Activated CD8-positive, alpha-beta T cell treated with anti-CD3 and anti-CD28 coated beads for 36 hours (primary cell): ENCODE measurements at regions of chr10 and their contacts with region 1.

Region 1: DNA sequence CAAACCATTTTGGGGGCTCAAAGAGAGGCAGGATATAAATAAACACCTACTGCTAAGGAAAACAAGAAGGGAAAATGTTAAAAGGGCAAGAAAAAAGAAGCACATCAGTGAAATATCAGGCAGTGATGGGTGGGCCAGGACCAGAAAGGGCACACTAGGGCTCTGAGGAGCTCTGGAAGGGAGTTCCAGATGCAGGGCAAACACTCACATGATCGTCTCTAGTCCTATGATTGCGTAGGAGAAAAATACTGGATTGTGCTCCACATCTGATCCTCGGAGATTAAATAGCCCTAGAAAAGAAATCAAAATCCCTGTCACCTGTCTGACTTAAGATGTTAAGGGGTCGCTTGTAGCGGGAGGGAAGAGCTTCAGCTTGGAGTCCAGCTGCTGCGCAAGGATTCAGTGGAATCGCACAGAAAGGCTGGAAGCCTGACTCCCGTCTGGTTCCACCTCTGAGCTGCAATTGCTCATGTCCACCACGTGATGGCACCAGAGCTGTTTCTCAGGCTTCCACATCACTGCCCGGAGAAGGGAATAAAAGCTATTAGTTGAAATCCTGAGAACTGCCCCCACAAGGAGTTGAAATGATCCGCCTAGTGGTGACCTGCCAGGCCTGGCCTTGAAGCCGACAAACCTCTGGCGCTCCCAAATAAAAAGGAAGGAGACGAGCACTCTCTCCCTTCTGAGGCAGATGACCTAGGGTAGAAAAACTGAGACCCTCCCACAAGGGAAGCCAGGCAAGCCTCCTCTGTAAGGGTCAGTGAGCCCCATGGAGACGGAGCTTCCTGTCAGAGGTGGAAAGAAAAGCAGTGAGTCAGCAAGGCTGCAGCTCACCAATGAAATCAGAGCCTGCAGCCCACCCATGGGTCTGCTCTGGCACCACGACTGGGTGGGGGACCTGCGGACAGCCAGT is 39.2 kb downstream of the XPNPEP1 start:
- DNase-seq: peak; percentile 51
- ATAC-seq: peak; percentile 80
- H3K4me3 Mint-ChIP-seq: no peak overlapping the region
- H3K27ac Mint-ChIP-seq: no peak overlapping the region
- H3K4me1 Mint-ChIP-seq: peaks cover 32% of the 10 kb centered on the region
- H3K27me3 Mint-ChIP-seq: no peaks in the 10 kb centered on the region
- CTCF ChIP-seq: peak; percentile 95

Region 2: DNA sequence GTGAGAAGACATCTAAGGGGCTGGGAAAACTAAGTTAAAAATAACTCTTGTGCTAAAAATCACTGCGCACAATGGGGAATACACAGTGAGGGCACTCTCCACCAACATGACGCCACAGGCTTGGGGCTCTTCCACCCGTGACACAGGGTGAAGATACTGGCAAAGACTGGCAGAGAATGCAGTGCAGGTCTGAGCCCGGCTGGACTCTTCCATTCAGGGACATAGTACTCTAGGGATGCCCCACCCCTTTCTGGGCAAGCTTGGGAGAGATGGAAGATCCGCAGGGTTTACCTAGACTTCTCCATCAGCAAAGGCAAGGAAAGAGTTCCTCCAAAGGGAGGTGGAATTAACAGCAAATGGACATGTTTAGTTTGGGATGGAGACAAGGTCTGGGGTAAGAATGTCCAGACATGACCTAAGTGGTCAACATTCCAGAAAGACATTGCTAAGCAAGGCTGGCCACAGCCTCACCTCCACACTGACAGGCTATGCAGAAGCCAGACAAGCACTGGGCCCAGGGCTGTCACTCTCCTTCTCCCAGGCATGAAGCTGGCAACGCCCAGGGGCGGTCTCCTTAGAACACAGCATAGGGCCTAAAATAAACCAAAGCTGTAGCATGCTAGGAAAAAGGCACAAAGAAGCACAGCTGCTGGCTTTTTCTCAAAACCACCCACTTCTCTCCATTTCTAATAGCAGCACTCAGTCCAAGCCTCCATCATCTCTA is 11.1 kb after region 1 on chr10:
- CTCF ChIA-PET with region 1: interaction called, 22 read pairs
- POLR2A ChIA-PET with region 1: no interaction called
- intact Hi-C with region 1: no loop called
- DNase-seq: no peak
- ATAC-seq: no peak
- H3K4me3 Mint-ChIP-seq: no peak overlapping the region
- H3K27ac Mint-ChIP-seq: no peak overlapping the region
- H3K4me1 Mint-ChIP-seq: peaks cover 54% of the 10 kb centered on the region
- H3K27me3 Mint-ChIP-seq: no peaks in the 10 kb centered on the region
- CTCF ChIP-seq: no peak

Region 3: DNA sequence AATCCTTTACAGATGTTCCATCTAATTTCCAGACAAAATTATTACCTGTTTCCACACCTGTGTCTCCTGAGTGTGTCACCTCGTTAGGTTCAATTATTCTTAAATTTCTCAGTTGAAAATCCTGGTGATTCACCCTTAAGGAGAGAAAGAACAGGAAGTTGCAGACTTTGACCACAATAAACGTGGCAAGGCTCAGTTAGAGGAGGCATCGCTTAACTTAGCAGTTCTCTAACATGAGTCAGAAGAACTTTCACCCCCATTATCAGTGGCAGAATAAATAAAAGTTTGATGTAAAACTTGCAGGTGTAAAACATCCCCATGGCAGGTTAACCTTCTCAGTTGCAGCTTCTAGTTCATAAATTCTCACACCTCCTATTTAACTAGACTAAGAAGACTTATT is 30.9 kb after region 1 on chr10:
- CTCF ChIA-PET with region 1: interaction called, 41 read pairs
- POLR2A ChIA-PET with region 1: no interaction called
- intact Hi-C with region 1: no loop called
- DNase-seq: peak; percentile 66
- ATAC-seq: peak; percentile 87
- H3K4me3 Mint-ChIP-seq: peak overlapping the region; percentile 30
- H3K27ac Mint-ChIP-seq: peak overlapping the region; percentile 88
- H3K4me1 Mint-ChIP-seq: peaks cover 79% of the 10 kb centered on the region
- H3K27me3 Mint-ChIP-seq: no peaks in the 10 kb centered on the region
- CTCF ChIP-seq: no peak

Region 4: DNA sequence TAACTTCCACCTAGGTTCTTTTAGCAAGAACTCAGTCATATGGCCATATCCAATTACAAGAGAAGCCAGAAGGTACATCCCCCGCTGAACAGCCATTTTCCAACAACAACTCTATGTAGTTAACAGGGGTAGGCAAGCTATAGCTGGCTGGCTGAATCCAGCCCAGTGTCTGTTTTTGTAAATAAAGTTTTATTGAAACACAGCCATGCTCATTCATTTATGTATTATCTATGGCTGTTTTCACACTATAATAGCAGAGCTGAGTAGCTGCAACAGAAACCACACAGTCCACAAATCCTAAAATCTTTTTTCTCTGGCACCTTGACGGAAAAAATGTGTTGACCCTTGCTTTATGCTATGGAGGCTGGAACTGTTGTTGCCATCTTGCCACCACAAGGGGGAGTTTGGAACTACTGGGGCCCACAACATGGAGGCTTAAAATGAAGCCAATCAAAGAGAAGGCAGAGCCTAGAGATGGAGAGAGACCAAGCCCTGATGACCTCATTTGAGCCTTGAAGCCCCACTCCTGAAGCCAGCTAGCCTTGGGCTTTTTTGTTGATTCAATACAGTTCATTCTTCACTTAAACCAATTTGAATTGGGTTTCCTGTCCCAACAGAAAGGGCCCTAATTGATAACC is 72.5 kb after region 1 on chr10:
- CTCF ChIA-PET with region 1: interaction called, 26 read pairs
- POLR2A ChIA-PET with region 1: no interaction called
- intact Hi-C with region 1: loop called (anchors 5 kb)
- DNase-seq: peak; percentile 50
- ATAC-seq: peak; percentile 97
- H3K4me3 Mint-ChIP-seq: no peak overlapping the region
- H3K27ac Mint-ChIP-seq: no peak overlapping the region
- H3K4me1 Mint-ChIP-seq: peaks cover 10% of the 10 kb centered on the region
- H3K27me3 Mint-ChIP-seq: no peaks in the 10 kb centered on the region
- CTCF ChIP-seq: peak; percentile 74

Region 5: DNA sequence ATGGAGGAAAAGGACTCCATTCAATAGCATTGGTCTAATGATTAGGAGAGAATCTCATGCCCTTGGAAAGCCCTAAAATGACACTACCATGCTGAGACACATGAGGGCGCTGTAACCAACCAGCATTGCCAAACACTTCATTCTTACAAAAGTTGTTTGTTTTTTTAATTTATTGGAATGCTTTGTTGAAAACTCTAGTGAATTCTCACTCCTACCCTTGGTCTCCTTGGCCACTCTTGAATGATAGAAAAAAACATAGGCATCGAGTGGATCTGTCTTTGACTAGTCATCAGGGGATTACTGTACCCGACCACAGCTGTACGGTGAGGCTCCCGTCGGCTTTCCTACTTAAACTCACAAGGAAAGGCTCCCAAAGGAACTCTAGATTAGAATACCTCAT is 94.4 kb after region 1 on chr10:
- CTCF ChIA-PET with region 1: interaction called, 21 read pairs
- POLR2A ChIA-PET with region 1: no interaction called
- intact Hi-C with region 1: no loop called
- DNase-seq: peak; percentile 82
- ATAC-seq: peak; percentile 77
- H3K4me3 Mint-ChIP-seq: no peak overlapping the region
- H3K27ac Mint-ChIP-seq: no peak overlapping the region
- H3K4me1 Mint-ChIP-seq: peaks cover 15% of the 10 kb centered on the region
- H3K27me3 Mint-ChIP-seq: no peaks in the 10 kb centered on the region
- CTCF ChIP-seq: peak; percentile 97

Region 6: GRCh38 chr10:110109511-110109910 is 225.4 kb after region 1 on chr10:
- CTCF ChIA-PET with region 1: interaction called, 14 read pairs
- POLR2A ChIA-PET with region 1: no interaction called
- intact Hi-C with region 1: no loop called
- DNase-seq: no peak
- ATAC-seq: no peak
- H3K4me3 Mint-ChIP-seq: no peak overlapping the region
- H3K27ac Mint-ChIP-seq: peak overlapping the region; percentile 53
- H3K4me1 Mint-ChIP-seq: peaks cover 32% of the 10 kb centered on the region
- H3K27me3 Mint-ChIP-seq: no peaks in the 10 kb centered on the region
- CTCF ChIP-seq: no peak